CD4-positive, alpha-beta T cell (primary cell): ENCODE measurements at regions of chr3 and their contacts with region 1.

Region 1: DNA sequence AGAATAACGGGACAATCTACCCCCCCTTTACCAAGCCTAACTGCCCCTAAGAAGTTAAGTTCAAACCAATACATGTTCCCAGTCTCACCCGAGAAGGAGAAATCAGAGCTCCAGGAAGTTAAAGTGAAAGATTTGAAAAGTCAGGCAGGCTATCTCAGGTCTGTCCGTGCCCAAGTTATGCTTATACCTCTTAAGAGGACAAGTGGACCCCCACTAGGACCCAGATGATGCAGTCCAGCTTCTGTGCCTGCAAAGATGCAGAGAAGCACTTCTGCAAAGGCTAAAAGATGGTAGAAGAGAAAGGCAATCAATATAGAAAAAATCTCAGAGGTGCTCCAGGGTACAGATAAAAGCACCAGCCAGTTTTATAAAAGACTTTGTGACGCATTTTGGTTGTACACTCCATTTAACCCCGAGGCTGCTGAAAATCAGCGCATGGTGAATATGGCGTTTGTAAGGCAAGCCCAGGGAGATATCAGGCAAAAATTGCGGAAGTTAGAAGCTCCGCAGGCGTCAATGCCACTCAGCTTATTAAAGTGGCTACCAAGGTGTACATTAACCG is 9.8 kb upstream of the SLC9C1 start:
- DNase-seq: peak in 8 of 14 experiments; percentile 8 to 52 (median 23)
- ATAC-seq: peak; percentile 83
- H3K4me3 ChIP-seq: peak overlapping the region; percentile 60
- H3K4me3 Mint-ChIP-seq: no peak overlapping the region
- H3K27ac ChIP-seq: no peak overlapping the region
- H3K27ac Mint-ChIP-seq: no peak overlapping the region
- H3K4me1 ChIP-seq: peaks cover 22% of the 10 kb centered on the region
- H3K4me1 Mint-ChIP-seq: peaks cover 1% of the 10 kb centered on the region
- H3K27me3 ChIP-seq: no peaks in the 10 kb centered on the region
- H3K27me3 Mint-ChIP-seq: no peaks in the 10 kb centered on the region
- CTCF ChIP-seq: no peak

Region 2: DNA sequence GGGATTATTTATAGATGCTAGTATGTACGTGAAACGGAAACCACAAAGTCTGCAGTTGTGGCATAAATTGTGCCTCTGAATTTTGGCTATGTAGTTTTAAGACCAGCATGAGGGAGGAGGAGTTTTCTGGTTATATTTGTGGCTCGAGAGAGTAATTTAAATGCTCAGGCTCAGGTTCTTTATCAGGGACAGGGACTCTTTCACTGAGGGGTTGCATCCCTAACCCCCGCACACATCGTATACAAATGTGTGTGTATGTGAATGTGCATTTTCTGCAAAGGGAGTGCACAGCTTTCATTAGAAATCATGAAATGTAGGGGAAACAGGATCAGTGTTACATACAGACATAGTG is 183.4 kb before region 1 on chr3:
- CTCF ChIA-PET with region 1: no interaction called
- POLR2A ChIA-PET with region 1: no interaction called
- intact Hi-C with region 1: loop called in 1 of 2 experiments (anchors 5 kb)
- DNase-seq: peak in 3 of 14 experiments; percentile 45 to 55 (median 49)
- ATAC-seq: peak; percentile 82
- H3K4me3 ChIP-seq: no peak overlapping the region
- H3K4me3 Mint-ChIP-seq: peak overlapping the region; percentile 66
- H3K27ac ChIP-seq: no peak overlapping the region
- H3K27ac Mint-ChIP-seq: peak overlapping the region; percentile 32
- H3K4me1 ChIP-seq: peaks cover 13% of the 10 kb centered on the region
- H3K4me1 Mint-ChIP-seq: peaks cover 71% of the 10 kb centered on the region
- H3K27me3 ChIP-seq: no peaks in the 10 kb centered on the region
- H3K27me3 Mint-ChIP-seq: no peaks in the 10 kb centered on the region
- CTCF ChIP-seq: no peak

Region 3: GRCh38 chr3:112136959-112137693 is 166.7 kb before region 1 on chr3:
- CTCF ChIA-PET with region 1: interaction called, 3 read pairs
- POLR2A ChIA-PET with region 1: no interaction called
- intact Hi-C with region 1: loop called in 1 of 2 experiments (anchors 10 kb)
- DNase-seq: peak in 11 of 14 experiments; percentile 19 to 75 (median 30)
- ATAC-seq: no peak
- H3K4me3 ChIP-seq: no peak overlapping the region
- H3K4me3 Mint-ChIP-seq: no peak overlapping the region
- H3K27ac ChIP-seq: no peak overlapping the region
- H3K27ac Mint-ChIP-seq: peak overlapping the region; percentile 27
- H3K4me1 ChIP-seq: peaks cover 36% of the 10 kb centered on the region
- H3K4me1 Mint-ChIP-seq: peaks cover 60% of the 10 kb centered on the region
- H3K27me3 ChIP-seq: no peaks in the 10 kb centered on the region
- H3K27me3 Mint-ChIP-seq: no peaks in the 10 kb centered on the region
- CTCF ChIP-seq: peak; percentile 68